Activated CD4-positive, alpha-beta T cell treated with anti-CD3 and anti-CD28 coated beads, Interleukin-2, amount 10 ng/mL, durations not matched to agents 24 days and 14 days (primary cell): ENCODE measurements at regions of chr10 and their contacts with region 1.

Region 1: GRCh38 chr10:24724381-24725228 is 918 bp upstream of the ARHGAP21 start:
- DNase-seq: peak; percentile 99
- H3K4me3 Mint-ChIP-seq: peak overlapping the region; percentile 93
- H3K27ac Mint-ChIP-seq: peak overlapping the region; percentile 96
- H3K4me1 Mint-ChIP-seq: peaks cover 26% of the 10 kb centered on the region
- H3K27me3 Mint-ChIP-seq: no peaks in the 10 kb centered on the region

Region 2: GRCh38 chr10:23438550-23439441 is 1285.8 kb before region 1 on chr10 and contains the start of gene OTUD1:
- intact Hi-C with region 1: loop called (anchors 10 kb)
- DNase-seq: peak; percentile 99
- H3K4me3 Mint-ChIP-seq: peak within 1 kb of the TSS; percentile 96
- H3K27ac Mint-ChIP-seq: peak within 1 kb of the TSS; percentile 86
- H3K4me1 Mint-ChIP-seq: peaks cover 39% of the 10 kb centered on the region
- H3K27me3 Mint-ChIP-seq: no peaks in the 10 kb centered on the region
- total RNA-seq, gene OTUD1: 12.6 and 12.8 TPM in 2 replicates

Region 3: GRCh38 chr10:24603333-24603732 is 121.3 kb before region 1 on chr10:
- intact Hi-C with region 1: loop called (anchors 5 kb)
- DNase-seq: no peak
- H3K4me3 Mint-ChIP-seq: peak overlapping the region; percentile 32
- H3K27ac Mint-ChIP-seq: peak overlapping the region; percentile 85
- H3K4me1 Mint-ChIP-seq: peaks cover 27% of the 10 kb centered on the region
- H3K27me3 Mint-ChIP-seq: no peaks in the 10 kb centered on the region

Region 4: DNA sequence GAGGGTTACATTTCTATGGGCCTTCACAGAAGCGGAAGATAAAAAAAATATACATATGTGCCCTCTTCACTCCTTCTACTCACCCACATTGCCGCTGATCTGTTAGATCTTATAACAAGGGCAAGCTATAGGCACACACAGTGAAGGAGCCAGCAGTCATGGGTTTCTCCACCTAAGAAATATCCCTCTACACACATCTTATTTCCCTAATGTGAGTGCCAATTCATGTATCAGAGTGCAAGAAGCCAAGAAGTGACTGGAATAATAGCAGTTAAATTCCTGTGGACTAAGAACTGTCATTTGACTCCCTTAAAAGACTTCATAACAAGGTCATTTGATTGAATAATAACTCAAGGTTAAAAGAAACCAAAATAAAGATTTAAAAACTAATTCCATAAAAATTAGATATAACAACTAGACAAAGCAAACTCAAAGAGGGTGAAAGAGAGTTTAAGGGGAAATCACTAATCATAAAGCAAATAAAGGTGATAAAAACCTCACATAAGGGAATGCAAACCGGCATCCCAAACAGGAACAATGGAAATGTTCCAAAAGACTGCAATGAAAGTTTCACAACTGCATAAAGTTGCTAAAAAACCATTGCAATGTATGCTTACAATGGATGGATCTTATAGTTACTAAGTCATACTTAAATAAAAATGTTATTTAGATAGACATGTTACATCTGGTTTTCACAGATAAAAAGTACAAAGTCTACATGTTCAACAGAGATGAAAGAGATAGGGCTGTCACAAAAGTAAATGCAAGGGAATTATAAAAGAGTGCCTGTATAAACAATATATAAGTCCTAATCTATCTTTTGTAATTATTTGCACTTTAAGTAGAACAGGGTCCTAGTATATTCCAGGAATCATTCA is 43.7 kb before region 1 on chr10:
- intact Hi-C with region 1: no loop called
- DNase-seq: no peak
- H3K4me3 Mint-ChIP-seq: no peak overlapping the region
- H3K27ac Mint-ChIP-seq: no peak overlapping the region
- H3K4me1 Mint-ChIP-seq: peaks cover 4% of the 10 kb centered on the region
- H3K27me3 Mint-ChIP-seq: no peaks in the 10 kb centered on the region

Region 5: GRCh38 chr10:24706479-24707118 is 18.0 kb before region 1 on chr10:
- intact Hi-C with region 1: loop called (anchors 1 kb)
- DNase-seq: peak; percentile 78
- H3K4me3 Mint-ChIP-seq: no peak overlapping the region
- H3K27ac Mint-ChIP-seq: no peak overlapping the region
- H3K4me1 Mint-ChIP-seq: peaks cover 22% of the 10 kb centered on the region
- H3K27me3 Mint-ChIP-seq: no peaks in the 10 kb centered on the region

Region 6: GRCh38 chr10:24901686-24902399 is 177.2 kb after region 1 on chr10:
- intact Hi-C with region 1: loop called (anchors 5 kb)
- DNase-seq: no peak
- H3K4me3 Mint-ChIP-seq: peak overlapping the region; percentile 62
- H3K27ac Mint-ChIP-seq: peak overlapping the region; percentile 85
- H3K4me1 Mint-ChIP-seq: peaks cover 30% of the 10 kb centered on the region
- H3K27me3 Mint-ChIP-seq: no peaks in the 10 kb centered on the region

Region 7: GRCh38 chr10:25080880-25081581 is 356.4 kb after region 1 on chr10:
- intact Hi-C with region 1: loop called (anchors 5 kb)
- DNase-seq: peak; percentile 89
- H3K4me3 Mint-ChIP-seq: no peak overlapping the region
- H3K27ac Mint-ChIP-seq: no peak overlapping the region
- H3K4me1 Mint-ChIP-seq: peaks cover 11% of the 10 kb centered on the region
- H3K27me3 Mint-ChIP-seq: peaks cover 18% of the 10 kb centered on the region